H1 (cell line): ENCODE measurements at regions of chr16 and their contacts with region 1.

Region 1: DNA sequence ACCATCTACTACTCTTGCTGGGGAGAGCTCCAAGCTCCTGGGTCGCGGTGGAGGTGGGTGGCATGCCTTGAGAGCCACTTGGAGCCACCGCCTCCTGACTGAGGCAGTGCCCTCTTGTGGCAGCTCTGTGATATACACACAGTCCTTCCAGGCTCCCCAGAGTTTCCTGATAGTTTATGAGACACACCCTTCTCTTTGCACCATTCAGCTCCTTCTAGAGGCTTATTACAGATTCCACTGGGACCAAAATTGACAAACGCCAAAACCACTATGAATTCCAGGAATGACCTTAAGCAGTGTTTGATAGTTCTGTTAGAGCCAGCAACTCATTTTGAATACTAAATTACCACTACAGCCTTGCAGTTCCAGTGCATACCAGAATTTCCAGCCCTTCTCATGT is 170.1 kb upstream of the CDH13 start:
- DNase-seq: peak; percentile 44 to 69
- H3K4me3 ChIP-seq: no peak overlapping the region
- H3K27ac ChIP-seq: no peak overlapping the region
- H3K4me1 ChIP-seq: no peaks in the 10 kb centered on the region
- H3K27me3 ChIP-seq: peaks cover 0 to 3% (median 0%) of the 10 kb centered on the region in 4 experiments; a peak in 1 of 7 replicates
- CTCF ChIP-seq: peak; percentile 82 to 89 (median 84)
- EP300 ChIP-seq: no peak
- POLR2A ChIP-seq: no peak
- RAD21 ChIP-seq: peak; percentile 74 to 82

Region 2: DNA sequence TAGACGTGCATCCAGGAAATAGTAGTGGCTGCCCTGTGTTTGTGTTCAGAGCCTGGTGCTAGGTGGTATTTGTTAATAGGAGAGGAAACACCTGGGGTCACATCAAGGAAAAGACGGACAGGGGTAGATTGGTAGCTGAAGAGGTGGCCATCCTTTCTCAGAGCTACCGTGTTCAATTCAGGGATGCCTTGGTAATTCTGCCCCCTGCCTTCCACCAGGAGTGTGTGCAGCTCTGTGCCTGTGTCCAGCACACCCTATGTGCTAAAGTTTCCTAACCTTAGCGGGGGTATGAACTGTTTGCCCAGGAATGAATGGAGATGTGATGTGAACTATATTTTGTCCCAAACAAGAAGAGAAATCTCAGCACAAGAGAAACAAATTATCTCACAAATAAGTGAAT is 112.5 kb before region 1 on chr16:
- CTCF ChIA-PET with region 1: interaction called, 17 read pairs
- POLR2A ChIA-PET with region 1: no interaction called
- DNase-seq: no peak
- H3K4me3 ChIP-seq: no peak overlapping the region
- H3K27ac ChIP-seq: no peak overlapping the region
- H3K4me1 ChIP-seq: no peaks in the 10 kb centered on the region; a peak in 1 of 7 replicates
- H3K27me3 ChIP-seq: no peaks in the 10 kb centered on the region
- CTCF ChIP-seq: peak; percentile 66 to 82 (median 80)
- EP300 ChIP-seq: no peak
- POLR2A ChIP-seq: no peak
- RAD21 ChIP-seq: peak; percentile 74 to 76

Region 3: GRCh38 chr16:82368041-82368440 is 88.6 kb before region 1 on chr16:
- CTCF ChIA-PET with region 1: interaction called, 14 read pairs
- POLR2A ChIA-PET with region 1: no interaction called
- DNase-seq: no peak
- H3K4me3 ChIP-seq: no peak overlapping the region
- H3K27ac ChIP-seq: no peak overlapping the region
- H3K4me1 ChIP-seq: no peaks in the 10 kb centered on the region
- H3K27me3 ChIP-seq: no peaks in the 10 kb centered on the region
- CTCF ChIP-seq: peak; percentile 29 to 45 (median 42)
- EP300 ChIP-seq: no peak
- POLR2A ChIP-seq: no peak
- RAD21 ChIP-seq: peak; percentile 46 to 54; a peak in 3 of 4 replicates

Region 4: GRCh38 chr16:82404586-82405305 is 51.9 kb before region 1 on chr16:
- CTCF ChIA-PET with region 1: no interaction called
- POLR2A ChIA-PET with region 1: no interaction called
- DNase-seq: no peak
- H3K4me3 ChIP-seq: no peak overlapping the region
- H3K27ac ChIP-seq: no peak overlapping the region
- H3K4me1 ChIP-seq: no peaks in the 10 kb centered on the region
- H3K27me3 ChIP-seq: no peaks in the 10 kb centered on the region
- CTCF ChIP-seq: no peak
- EP300 ChIP-seq: no peak
- POLR2A ChIP-seq: no peak
- RAD21 ChIP-seq: no peak

Region 5: DNA sequence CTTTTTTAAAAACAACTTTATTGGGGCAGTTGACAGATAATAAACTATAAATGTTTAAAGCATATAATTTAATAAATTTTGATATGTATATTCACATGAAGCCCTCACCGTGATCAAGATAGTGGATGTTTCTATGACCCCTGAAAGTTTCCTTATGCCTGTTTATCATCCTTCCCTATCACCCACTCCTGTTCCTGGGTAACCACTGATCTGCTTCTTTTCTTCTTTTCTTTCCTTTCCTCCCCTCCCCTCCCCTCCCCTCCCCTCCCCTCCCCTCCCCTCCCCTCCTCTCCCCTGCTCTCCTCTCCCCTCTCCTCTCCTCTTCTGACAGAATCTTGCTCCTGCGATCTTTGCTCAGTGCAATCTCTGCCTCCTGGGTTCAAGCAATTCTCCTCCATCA is 23.6 kb before region 1 on chr16:
- CTCF ChIA-PET with region 1: interaction called, 69 read pairs
- POLR2A ChIA-PET with region 1: no interaction called
- DNase-seq: no peak
- H3K4me3 ChIP-seq: no peak overlapping the region
- H3K27ac ChIP-seq: no peak overlapping the region
- H3K4me1 ChIP-seq: no peaks in the 10 kb centered on the region
- H3K27me3 ChIP-seq: peaks cover 0 to 1% (median 0%) of the 10 kb centered on the region in 4 experiments; a peak in 1 of 7 replicates
- CTCF ChIP-seq: no peak
- EP300 ChIP-seq: no peak
- POLR2A ChIP-seq: no peak
- RAD21 ChIP-seq: no peak

Region 6: GRCh38 chr16:82470620-82471152 is 14.0 kb after region 1 on chr16:
- CTCF ChIA-PET with region 1: interaction called, 55 read pairs
- POLR2A ChIA-PET with region 1: no interaction called
- DNase-seq: no peak
- H3K4me3 ChIP-seq: no peak overlapping the region
- H3K27ac ChIP-seq: no peak overlapping the region
- H3K4me1 ChIP-seq: no peaks in the 10 kb centered on the region
- H3K27me3 ChIP-seq: no peaks in the 10 kb centered on the region
- CTCF ChIP-seq: no peak
- EP300 ChIP-seq: no peak
- POLR2A ChIP-seq: no peak
- RAD21 ChIP-seq: no peak

Region 7: GRCh38 chr16:82580298-82580890 is 123.7 kb after region 1 on chr16:
- CTCF ChIA-PET with region 1: interaction called, 16 read pairs
- POLR2A ChIA-PET with region 1: no interaction called
- DNase-seq: no peak
- H3K4me3 ChIP-seq: no peak overlapping the region
- H3K27ac ChIP-seq: no peak overlapping the region
- H3K4me1 ChIP-seq: no peaks in the 10 kb centered on the region
- H3K27me3 ChIP-seq: no peaks in the 10 kb centered on the region
- CTCF ChIP-seq: peak; percentile 35 to 63 (median 54)
- EP300 ChIP-seq: no peak
- POLR2A ChIP-seq: no peak
- RAD21 ChIP-seq: peak; percentile 72 to 80

Region 8: GRCh38 chr16:83441517-83441916 is 984.8 kb after region 1 on chr16:
- CTCF ChIA-PET with region 1: interaction called, 11 read pairs
- POLR2A ChIA-PET with region 1: no interaction called
- DNase-seq: no peak
- H3K4me3 ChIP-seq: no peak overlapping the region
- H3K27ac ChIP-seq: no peak overlapping the region
- H3K4me1 ChIP-seq: no peaks in the 10 kb centered on the region
- H3K27me3 ChIP-seq: no peaks in the 10 kb centered on the region
- CTCF ChIP-seq: no peak
- EP300 ChIP-seq: no peak
- POLR2A ChIP-seq: no peak
- RAD21 ChIP-seq: no peak